CD14-positive monocyte (primary cell): ENCODE measurements at regions of chr2 and their contacts with region 1.

Region 1: DNA sequence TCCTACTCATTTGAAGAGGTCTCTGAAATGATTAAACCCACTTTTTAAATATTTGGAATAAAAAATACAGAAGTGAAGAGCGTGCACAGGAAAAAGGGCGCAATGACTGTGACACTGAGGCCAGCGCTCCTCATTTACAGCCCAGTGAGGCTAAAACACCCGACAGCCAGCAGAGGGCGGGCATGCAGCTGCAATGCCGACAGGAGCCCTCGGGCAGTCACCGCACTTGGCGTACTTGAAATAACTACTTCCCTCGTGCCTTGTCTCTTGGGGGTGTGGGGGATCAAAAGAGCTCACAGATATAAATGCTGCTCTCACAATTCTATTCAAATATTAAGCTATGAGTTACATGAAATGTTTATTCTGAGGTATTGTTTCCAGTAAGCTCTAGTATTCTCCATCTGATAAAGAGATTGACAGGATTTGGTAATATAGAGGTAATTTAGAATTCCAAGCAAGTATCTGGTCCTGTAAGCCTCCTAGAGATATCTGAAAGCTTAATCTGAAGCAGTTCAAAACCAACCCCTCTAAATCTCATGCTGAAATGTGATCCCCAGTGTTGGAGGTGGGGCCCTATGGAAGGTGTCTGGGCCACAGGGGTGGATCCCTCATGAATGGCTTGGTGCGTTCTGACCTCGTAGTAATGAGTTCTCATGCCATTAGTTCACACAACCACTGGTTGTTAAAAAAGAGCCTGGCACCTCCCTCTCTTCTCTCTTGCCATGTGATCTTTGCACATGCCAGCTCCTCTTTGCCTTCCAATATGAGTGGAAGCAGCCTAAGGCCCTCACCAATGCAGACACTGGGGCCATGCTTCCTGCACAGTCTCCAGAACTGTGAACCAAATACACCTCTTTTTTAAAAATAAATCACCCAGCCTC is 93.6 kb downstream of the ZAP70 start:
- DNase-seq: peak; percentile 55 to 66 (median 58)
- H3K4me3 ChIP-seq: no peak overlapping the region
- H3K4me3 Mint-ChIP-seq: no peak overlapping the region
- H3K27ac ChIP-seq: no peak overlapping the region
- H3K27ac Mint-ChIP-seq: no peak overlapping the region
- H3K4me1 ChIP-seq: no peaks in the 10 kb centered on the region
- H3K4me1 Mint-ChIP-seq: no peaks in the 10 kb centered on the region
- H3K27me3 ChIP-seq: no peaks in the 10 kb centered on the region
- H3K27me3 Mint-ChIP-seq: no peaks in the 10 kb centered on the region
- CTCF ChIP-seq: peak; percentile 86

Region 2: GRCh38 chr2:97849881-97850528 is 43.0 kb after region 1 on chr2:
- intact Hi-C with region 1: no loop called
- DNase-seq: no peak
- H3K4me3 ChIP-seq: no peak overlapping the region
- H3K4me3 Mint-ChIP-seq: no peak overlapping the region
- H3K27ac ChIP-seq: no peak overlapping the region
- H3K27ac Mint-ChIP-seq: no peak overlapping the region
- H3K4me1 ChIP-seq: peaks cover 0 to 3% of the 10 kb centered on the region in 2 donors
- H3K4me1 Mint-ChIP-seq: peaks cover 12% of the 10 kb centered on the region
- H3K27me3 ChIP-seq: no peaks in the 10 kb centered on the region
- H3K27me3 Mint-ChIP-seq: no peaks in the 10 kb centered on the region
- CTCF ChIP-seq: no peak

Region 3: DNA sequence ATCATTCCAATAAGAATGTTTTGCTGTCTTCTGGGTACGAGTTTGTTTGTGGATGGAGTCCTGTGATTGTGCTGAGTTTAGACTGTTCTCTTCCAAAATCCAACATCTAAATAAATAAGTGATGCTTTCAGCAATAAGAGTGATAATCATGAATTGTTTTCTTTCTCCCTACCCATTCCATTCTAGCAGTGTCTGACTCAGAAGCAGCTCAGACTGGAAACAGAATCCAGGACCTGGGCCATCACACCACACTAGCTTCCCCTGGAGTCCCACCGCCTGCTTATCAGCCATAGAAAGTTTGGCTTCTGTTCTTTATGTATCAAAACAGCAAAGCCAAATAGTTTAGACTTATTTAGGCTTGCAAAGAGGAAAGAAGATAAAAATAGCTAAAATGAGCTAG is 462.9 kb after region 1 on chr2:
- intact Hi-C with region 1: loop called (anchors 5 kb)
- DNase-seq: no peak
- H3K4me3 ChIP-seq: no peak overlapping the region
- H3K4me3 Mint-ChIP-seq: no peak overlapping the region
- H3K27ac ChIP-seq: no peak overlapping the region
- H3K27ac Mint-ChIP-seq: no peak overlapping the region
- H3K4me1 ChIP-seq: no peaks in the 10 kb centered on the region
- H3K4me1 Mint-ChIP-seq: peaks cover 2% of the 10 kb centered on the region
- H3K27me3 ChIP-seq: peaks cover 0 to 3% of the 10 kb centered on the region in 2 donors
- H3K27me3 Mint-ChIP-seq: peaks cover 6 to 11% (median 6%) of the 10 kb centered on the region in 3 donors
- CTCF ChIP-seq: no peak

Region 4: GRCh38 chr2:98379672-98380535 is 572.9 kb after region 1 on chr2:
- intact Hi-C with region 1: loop called (anchors 2 to 5 kb)
- DNase-seq: no peak
- H3K4me3 ChIP-seq: no peak overlapping the region
- H3K4me3 Mint-ChIP-seq: no peak overlapping the region
- H3K27ac ChIP-seq: no peak overlapping the region
- H3K27ac Mint-ChIP-seq: no peak overlapping the region
- H3K4me1 ChIP-seq: no peaks in the 10 kb centered on the region
- H3K4me1 Mint-ChIP-seq: no peaks in the 10 kb centered on the region
- H3K27me3 ChIP-seq: peaks cover 0 to 2% of the 10 kb centered on the region in 2 donors
- H3K27me3 Mint-ChIP-seq: peaks cover 5 to 28% (median 17%) of the 10 kb centered on the region in 3 donors
- CTCF ChIP-seq: no peak